SK-N-SH (cell line): ENCODE measurements at regions of chr2 and their contacts with region 1.

Region 1: DNA sequence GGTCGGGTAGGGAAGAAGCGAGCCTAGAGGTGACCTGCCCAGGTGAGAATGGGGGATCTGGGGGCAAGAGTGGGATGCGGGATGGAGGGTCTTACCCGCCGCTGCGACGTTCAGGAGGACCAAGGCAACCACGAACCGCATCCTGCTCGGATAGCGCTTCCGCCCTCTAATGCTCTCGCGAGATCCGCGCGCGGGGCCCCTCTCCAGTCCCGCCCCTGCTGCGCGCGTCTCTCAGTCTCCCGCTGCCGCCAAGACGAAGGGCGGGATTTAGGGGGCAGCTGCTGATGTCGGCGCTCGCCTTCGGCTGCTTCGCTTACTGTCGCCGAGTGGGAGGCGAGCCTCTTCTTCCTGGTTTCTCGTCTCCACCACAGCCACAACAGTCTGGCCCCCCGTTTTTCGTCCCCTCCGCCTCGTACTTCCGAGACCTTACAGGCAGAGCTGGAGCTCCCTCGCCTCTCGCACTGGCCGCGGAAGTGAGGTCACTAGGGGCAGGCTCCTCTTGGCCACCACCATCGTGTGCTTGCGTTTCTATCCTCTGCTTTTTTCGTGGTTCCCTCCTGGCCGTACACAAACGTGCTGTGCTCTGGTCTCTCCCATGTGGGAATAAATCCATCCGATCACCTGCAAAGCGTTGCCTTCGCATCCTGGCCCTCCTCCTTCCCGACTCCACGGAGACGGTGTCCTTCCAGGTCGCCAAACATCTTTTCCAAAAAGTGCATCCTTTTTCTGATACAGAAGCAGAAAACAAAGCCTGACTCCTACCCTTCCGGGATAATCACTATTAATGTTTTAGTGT is at the start of gene TGOLN2:
- DNase-seq: peak; percentile 98
- H3K4me3 ChIP-seq: peak within 1 kb of the TSS; percentile 73 to 95
- H3K27ac ChIP-seq: peak within 1 kb of the TSS; percentile 88 to 97
- H3K4me1 ChIP-seq: peaks cover 7 to 24% of the 10 kb centered on the region in 2 experiments; a peak in 3 of 4 replicates
- H3K27me3 ChIP-seq: no peaks in the 10 kb centered on the region
- CTCF ChIP-seq: no peak
- EP300 ChIP-seq: 0 out of 4 replicates have a peak, but pooled peaks of 1 of the 2 experiments have one; percentile 1
- RAD21 ChIP-seq: no peak
- polyA plus RNA-seq, gene TGOLN2: 138 and 140 TPM in 2 replicates

Region 2: DNA sequence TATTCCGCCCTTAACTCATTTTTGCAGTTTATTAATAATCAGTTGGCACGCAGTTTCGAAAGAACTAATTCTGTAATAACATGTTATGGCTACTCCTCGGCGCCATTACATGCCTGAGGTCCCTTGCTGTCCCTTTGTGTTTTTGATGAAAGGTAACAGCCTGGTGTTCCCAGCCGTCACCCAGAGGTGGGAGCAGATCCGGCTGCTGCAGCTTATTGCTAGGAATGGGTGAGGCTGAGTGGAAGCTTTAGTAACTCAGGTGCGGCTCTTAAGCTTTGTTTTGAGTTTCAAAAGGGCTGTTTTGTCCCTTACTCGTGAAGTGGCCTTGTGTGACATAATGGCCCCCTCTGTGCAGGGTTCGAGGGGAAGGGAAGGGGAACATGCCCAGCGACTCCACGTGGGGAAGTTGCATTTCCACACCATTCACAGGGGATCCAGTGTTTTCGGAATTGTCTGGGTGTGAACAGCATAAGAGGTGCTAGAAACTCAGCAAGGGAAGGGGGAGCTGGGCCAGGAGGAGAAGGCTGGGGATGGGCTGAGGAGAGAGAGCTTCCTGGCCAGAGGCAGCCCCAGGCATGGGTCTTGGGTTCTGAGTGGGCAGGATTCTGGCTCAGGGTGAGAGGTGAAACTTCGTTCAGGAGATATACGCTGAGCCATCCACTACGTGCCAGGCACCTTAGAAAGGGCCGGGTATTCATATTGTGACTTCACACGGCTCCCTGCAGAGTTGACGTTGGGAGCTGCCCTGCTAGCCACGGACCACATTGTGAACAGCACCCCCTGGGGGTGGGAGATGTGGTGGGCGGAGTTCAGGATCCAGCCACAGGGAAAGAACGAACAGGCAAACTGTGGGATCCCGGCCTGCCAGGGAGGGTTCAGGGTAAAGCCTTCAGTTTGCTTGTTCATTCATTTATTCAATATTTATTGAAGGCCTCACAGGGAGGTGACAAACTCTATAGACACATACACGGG is 84.6 kb before region 1 on chr2:
- CTCF ChIA-PET with region 1: no interaction called
- POLR2A ChIA-PET with region 1: no interaction called
- DNase-seq: peak; percentile 66
- H3K4me3 ChIP-seq: no peak overlapping the region
- H3K27ac ChIP-seq: no peak overlapping the region
- H3K4me1 ChIP-seq: peaks cover 23 to 26% of the 10 kb centered on the region in 2 experiments
- H3K27me3 ChIP-seq: no peaks in the 10 kb centered on the region
- CTCF ChIP-seq: peak; percentile 52
- EP300 ChIP-seq: no peak
- RAD21 ChIP-seq: peak; percentile 64

Region 3: DNA sequence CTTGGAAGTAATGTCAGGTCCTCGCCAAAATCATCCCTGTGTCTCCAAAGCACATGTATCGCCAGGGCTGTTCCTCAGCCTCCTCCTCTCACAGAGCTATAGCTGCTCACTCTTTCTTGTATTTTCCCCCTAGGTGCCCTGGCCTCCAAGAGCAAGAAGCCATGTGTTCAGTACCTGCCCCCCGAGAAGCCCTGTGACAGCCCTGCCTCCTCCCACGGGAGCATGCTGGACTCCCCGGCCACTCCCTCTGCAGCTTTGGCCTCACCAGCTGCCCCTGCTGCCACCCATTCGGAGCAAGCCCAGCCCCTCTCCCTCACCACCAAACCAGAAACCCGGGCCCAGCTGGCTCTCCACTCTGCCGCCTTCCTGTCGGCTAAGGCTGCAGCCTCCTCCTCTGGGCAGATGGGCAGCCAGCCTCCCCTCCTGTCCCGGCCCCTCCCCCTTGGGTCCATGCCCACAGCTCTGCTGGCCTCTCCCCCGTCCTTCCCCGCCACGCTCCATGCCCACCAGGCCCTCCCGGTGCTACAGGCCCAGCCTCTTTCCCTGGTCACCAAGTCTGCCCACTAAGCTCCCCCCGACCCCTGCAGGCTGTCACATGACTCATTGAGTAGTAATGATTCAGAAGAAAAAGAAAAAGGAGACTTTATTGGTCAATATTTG is 19.0 kb before region 1 on chr2:
- CTCF ChIA-PET with region 1: interaction called, 3 read pairs
- POLR2A ChIA-PET with region 1: interaction called, 12 read pairs
- DNase-seq: peak; percentile 95
- H3K4me3 ChIP-seq: peak overlapping the region in 1 of 2 experiments; percentile 3; a peak in 1 of 4 replicates
- H3K27ac ChIP-seq: peak overlapping the region; percentile 51 to 69
- H3K4me1 ChIP-seq: peaks cover 10 to 17% of the 10 kb centered on the region in 2 experiments; a peak in 2 of 4 replicates
- H3K27me3 ChIP-seq: no peaks in the 10 kb centered on the region
- CTCF ChIP-seq: no peak
- EP300 ChIP-seq: no peak
- RAD21 ChIP-seq: no peak

Region 4: DNA sequence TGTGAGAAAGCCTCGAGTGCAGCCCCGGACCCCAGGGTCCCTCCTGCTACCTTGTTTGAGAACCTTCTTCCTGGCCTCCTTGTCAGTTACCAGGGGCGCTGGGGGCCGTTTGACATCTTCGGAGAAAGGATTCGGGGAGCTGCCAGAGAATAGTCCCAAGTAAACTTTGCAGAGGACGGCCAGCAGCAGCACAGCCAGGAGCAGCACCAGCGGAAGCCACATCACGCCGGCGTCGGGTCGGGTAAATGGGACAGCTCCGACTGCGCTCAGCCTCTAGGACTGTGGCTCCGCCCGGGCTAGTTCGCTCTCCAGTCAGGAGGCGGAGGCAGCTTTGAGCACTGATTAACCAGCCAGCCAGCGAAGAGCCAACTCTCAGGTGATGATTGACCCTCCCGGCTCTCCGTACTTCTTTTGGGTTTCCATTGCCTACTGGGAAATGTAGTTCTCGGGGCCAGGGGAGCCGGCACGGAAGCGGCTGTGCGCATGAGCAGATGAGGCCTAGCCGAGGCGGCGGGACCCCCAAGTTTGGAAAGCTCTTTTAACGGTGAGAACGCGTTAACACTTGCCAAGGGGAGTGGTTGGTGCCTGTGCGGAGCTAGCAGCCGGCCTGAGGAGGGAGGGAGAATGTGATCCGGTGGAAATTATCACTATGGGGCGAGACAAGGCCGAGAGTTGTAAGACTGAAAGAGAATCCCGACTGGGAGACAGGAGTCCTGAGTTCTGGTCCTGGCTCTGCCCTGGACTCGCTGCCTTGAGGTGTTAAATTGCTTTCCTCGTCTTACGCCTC is 26.5 kb after region 1 on chr2 and contains the starts of genes ELMOD3 and RETSAT:
- CTCF ChIA-PET with region 1: interaction called, 3 read pairs
- POLR2A ChIA-PET with region 1: interaction called, 14 read pairs
- DNase-seq: peak; percentile 92
- H3K4me3 ChIP-seq: peak within 1 kb of the TSS; percentile 75 to 89
- H3K27ac ChIP-seq: peak within 1 kb of the TSS; percentile 42 to 77; a peak in 3 of 4 replicates
- H3K4me1 ChIP-seq: peaks cover 5 to 10% of the 10 kb centered on the region in 2 experiments; a peak in 2 of 4 replicates
- H3K27me3 ChIP-seq: no peaks in the 10 kb centered on the region
- CTCF ChIP-seq: no peak
- EP300 ChIP-seq: peak in 1 of 2 experiments; percentile 44; a peak in 1 of 4 replicates
- RAD21 ChIP-seq: no peak
- polyA plus RNA-seq, gene ELMOD3: 15.4 and 25.1 TPM in 2 replicates
- polyA plus RNA-seq, gene RETSAT: 28.0 and 37.7 TPM in 2 replicates

Region 5: DNA sequence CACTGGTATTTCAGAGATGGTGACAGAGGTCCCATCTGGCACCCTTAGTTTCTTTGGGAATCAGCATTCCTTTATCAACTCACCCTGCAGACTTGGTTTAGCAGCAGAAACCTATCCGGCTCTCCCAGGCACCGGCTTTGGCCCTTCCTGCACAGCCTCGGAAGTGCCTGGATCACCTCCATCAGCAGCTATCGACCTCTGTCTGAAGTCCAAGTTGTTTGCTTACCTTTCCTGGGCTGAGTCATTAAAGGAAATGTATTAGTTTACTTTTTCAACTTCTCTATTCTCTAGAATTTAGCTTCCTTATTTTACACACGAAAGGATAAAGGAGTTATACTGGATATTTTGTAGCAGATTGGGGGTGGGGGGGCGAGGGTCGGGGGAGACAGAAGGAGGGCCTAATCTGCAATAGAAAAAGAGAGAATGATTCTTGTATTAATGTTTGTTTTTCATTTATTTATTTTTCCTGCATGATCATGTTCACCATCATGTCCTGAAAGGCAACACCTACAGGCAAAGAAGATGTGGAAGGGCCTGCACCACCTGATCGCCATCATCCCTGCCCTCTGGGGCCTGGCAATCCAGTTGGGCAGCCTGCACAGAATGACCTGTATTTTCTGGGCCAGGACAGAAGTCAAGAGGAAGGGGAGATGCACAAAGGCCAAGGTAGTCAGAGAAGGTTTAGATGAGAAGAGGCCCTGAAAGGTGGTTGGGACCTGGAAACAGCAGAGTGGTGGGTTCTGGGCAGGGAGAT is 188.8 kb after region 1 on chr2:
- CTCF ChIA-PET with region 1: no interaction called
- POLR2A ChIA-PET with region 1: no interaction called
- DNase-seq: no peak
- H3K4me3 ChIP-seq: no peak overlapping the region
- H3K27ac ChIP-seq: no peak overlapping the region
- H3K4me1 ChIP-seq: no peaks in the 10 kb centered on the region
- H3K27me3 ChIP-seq: no peaks in the 10 kb centered on the region
- CTCF ChIP-seq: no peak
- EP300 ChIP-seq: no peak
- RAD21 ChIP-seq: no peak